ENCODE measurements at regions of chr13 and their contacts with region 1.

Region 1: GRCh38 chr13:108227651-108228272 is 9.6 kb downstream of the ABHD13 start:
- DNase-seq: peak in 3 of 9 experiments; percentile 39 to 68 (median 59)
- ATAC-seq: peak; percentile 57
- H3K4me3 ChIP-seq: no peak overlapping the region
- H3K4me3 Mint-ChIP-seq: no peak overlapping the region
- H3K27ac ChIP-seq: no peak overlapping the region
- H3K27ac Mint-ChIP-seq: no peak overlapping the region
- H3K4me1 ChIP-seq: peaks cover 25% of the 10 kb centered on the region
- H3K4me1 Mint-ChIP-seq: peaks cover 56% of the 10 kb centered on the region
- H3K27me3 ChIP-seq: no peaks in the 10 kb centered on the region
- H3K27me3 Mint-ChIP-seq: no peaks in the 10 kb centered on the region
- CTCF ChIP-seq: peak; percentile 99

Region 2: GRCh38 chr13:108322206-108322824 is 94.6 kb after region 1 on chr13:
- CTCF ChIA-PET with region 1: interaction called, 3 read pairs
- POLR2A ChIA-PET with region 1: no interaction called
- intact Hi-C with region 1: loop called (anchors 5 kb)
- DNase-seq: peak in 2 of 9 experiments; percentile 38 to 48
- ATAC-seq: peak; percentile 72
- H3K4me3 ChIP-seq: no peak overlapping the region
- H3K4me3 Mint-ChIP-seq: no peak overlapping the region
- H3K27ac ChIP-seq: no peak overlapping the region
- H3K27ac Mint-ChIP-seq: no peak overlapping the region
- H3K4me1 ChIP-seq: no peaks in the 10 kb centered on the region
- H3K4me1 Mint-ChIP-seq: peaks cover 5% of the 10 kb centered on the region
- H3K27me3 ChIP-seq: no peaks in the 10 kb centered on the region
- H3K27me3 Mint-ChIP-seq: peaks cover 5% of the 10 kb centered on the region
- CTCF ChIP-seq: peak; percentile 82

Region 3: GRCh38 chr13:108508263-108508662 is 280.5 kb after region 1 on chr13:
- CTCF ChIA-PET with region 1: no interaction called
- POLR2A ChIA-PET with region 1: no interaction called
- intact Hi-C with region 1: loop called in 1 of 2 experiments (anchors 10 kb)
- DNase-seq: peak in 2 of 9 experiments; percentile 6 to 24
- ATAC-seq: no peak
- H3K4me3 ChIP-seq: no peak overlapping the region
- H3K4me3 Mint-ChIP-seq: no peak overlapping the region
- H3K27ac ChIP-seq: no peak overlapping the region
- H3K27ac Mint-ChIP-seq: no peak overlapping the region
- H3K4me1 ChIP-seq: no peaks in the 10 kb centered on the region
- H3K4me1 Mint-ChIP-seq: no peaks in the 10 kb centered on the region
- H3K27me3 ChIP-seq: no peaks in the 10 kb centered on the region
- H3K27me3 Mint-ChIP-seq: no peaks in the 10 kb centered on the region
- CTCF ChIP-seq: no peak

Region 4: DNA sequence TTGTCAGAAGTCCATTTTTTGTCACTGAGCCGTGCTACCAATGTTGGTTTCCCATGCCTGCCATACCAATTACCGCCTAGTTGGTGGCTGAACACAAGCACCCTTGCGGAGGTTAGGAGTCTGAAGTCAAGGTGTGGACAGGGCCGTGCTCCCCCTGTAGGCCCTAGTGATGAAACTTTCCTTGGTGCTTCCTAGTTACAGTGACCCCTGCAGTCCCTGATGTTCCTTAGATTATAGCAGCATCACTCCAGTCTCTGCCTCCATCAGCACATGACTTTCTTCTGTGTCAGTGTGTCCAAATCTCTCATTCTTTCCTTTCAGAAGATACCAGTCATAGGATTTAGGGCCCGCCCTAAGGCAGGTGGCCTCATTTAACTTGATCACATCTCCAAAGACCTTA is 500.6 kb after region 1 on chr13:
- CTCF ChIA-PET with region 1: no interaction called
- POLR2A ChIA-PET with region 1: no interaction called
- intact Hi-C with region 1: no loop called
- DNase-seq: no peak
- ATAC-seq: no peak
- H3K4me3 ChIP-seq: no peak overlapping the region
- H3K4me3 Mint-ChIP-seq: no peak overlapping the region
- H3K27ac ChIP-seq: no peak overlapping the region
- H3K27ac Mint-ChIP-seq: no peak overlapping the region
- H3K4me1 ChIP-seq: no peaks in the 10 kb centered on the region
- H3K4me1 Mint-ChIP-seq: no peaks in the 10 kb centered on the region
- H3K27me3 ChIP-seq: no peaks in the 10 kb centered on the region
- H3K27me3 Mint-ChIP-seq: peaks cover 3% of the 10 kb centered on the region
- CTCF ChIP-seq: no peak

Region 5: GRCh38 chr13:108895220-108895704 is 667.5 kb after region 1 on chr13:
- CTCF ChIA-PET with region 1: no interaction called
- POLR2A ChIA-PET with region 1: no interaction called
- intact Hi-C with region 1: loop called (anchors 2 to 5 kb)
- DNase-seq: peak in 2 of 9 experiments; percentile 11 to 20
- ATAC-seq: no peak
- H3K4me3 ChIP-seq: no peak overlapping the region
- H3K4me3 Mint-ChIP-seq: no peak overlapping the region
- H3K27ac ChIP-seq: no peak overlapping the region
- H3K27ac Mint-ChIP-seq: no peak overlapping the region
- H3K4me1 ChIP-seq: no peaks in the 10 kb centered on the region
- H3K4me1 Mint-ChIP-seq: peaks cover 7% of the 10 kb centered on the region
- H3K27me3 ChIP-seq: no peaks in the 10 kb centered on the region
- H3K27me3 Mint-ChIP-seq: no peaks in the 10 kb centered on the region
- CTCF ChIP-seq: peak; percentile 52

Region 6: DNA sequence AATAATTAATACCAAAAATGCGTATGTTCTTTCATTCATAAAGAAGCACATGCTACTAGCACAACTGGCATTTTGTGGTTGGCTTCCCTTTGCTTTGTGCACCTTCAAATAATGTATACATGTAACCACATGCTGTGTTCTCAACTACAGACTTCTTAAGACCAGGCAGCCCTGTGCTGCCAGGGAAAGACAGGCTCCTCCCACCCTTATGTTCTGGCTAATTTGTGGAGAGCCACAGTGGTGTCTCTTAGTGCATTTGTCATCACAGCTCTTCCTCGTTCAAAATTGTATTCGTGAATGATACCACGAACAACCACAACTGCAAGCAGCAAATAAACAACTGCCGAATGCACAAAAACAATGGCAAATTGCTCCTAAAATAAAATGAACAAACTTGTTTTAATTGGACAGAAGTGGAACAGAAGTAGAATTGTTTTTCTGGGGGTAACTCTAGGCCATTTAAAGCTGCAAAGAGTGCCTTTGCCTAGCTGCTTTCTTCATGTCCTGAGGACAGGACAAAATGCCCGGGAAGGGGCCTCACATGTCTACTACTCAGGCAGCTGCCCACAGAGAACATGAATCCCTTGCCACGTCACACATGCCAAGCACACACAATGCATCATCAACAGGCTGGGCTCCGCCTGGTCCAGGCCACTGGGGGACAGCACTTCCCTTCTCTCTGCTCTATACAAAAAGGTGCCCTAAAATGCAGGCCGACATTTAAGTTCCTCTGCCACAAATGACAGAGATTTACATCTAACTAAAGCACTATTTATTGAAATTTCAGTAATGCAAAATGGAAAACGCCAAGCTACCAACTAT is 1536.9 kb after region 1 on chr13:
- CTCF ChIA-PET with region 1: no interaction called
- POLR2A ChIA-PET with region 1: no interaction called
- intact Hi-C with region 1: loop called in 1 of 2 experiments (anchors 10 kb)
- DNase-seq: peak in 2 of 9 experiments; percentile 24 to 49
- ATAC-seq: peak; percentile 53
- H3K4me3 ChIP-seq: no peak overlapping the region
- H3K4me3 Mint-ChIP-seq: no peak overlapping the region
- H3K27ac ChIP-seq: no peak overlapping the region
- H3K27ac Mint-ChIP-seq: peak overlapping the region; percentile 32
- H3K4me1 ChIP-seq: peaks cover 10% of the 10 kb centered on the region
- H3K4me1 Mint-ChIP-seq: peaks cover 48% of the 10 kb centered on the region
- H3K27me3 ChIP-seq: no peaks in the 10 kb centered on the region
- H3K27me3 Mint-ChIP-seq: no peaks in the 10 kb centered on the region
- CTCF ChIP-seq: no peak

Measured in CD8-positive, alpha-beta T cell (primary cell).